Calu3 (cell line): ENCODE measurements at regions of chr9 and their contacts with region 1.

Region 1: GRCh38 chr9:69898714-69899209 is 78.1 kb downstream of the CFAP95 start:
- DNase-seq: no peak
- H3K4me3 Mint-ChIP-seq: peak overlapping the region; percentile 26
- H3K27ac Mint-ChIP-seq: peak overlapping the region; percentile 82
- H3K4me1 Mint-ChIP-seq: peaks cover 38% of the 10 kb centered on the region
- H3K27me3 Mint-ChIP-seq: no peaks in the 10 kb centered on the region
- CTCF ChIP-seq: no peak

Region 2: GRCh38 chr9:69771775-69772418 is 126.9 kb before region 1 on chr9:
- CTCF ChIA-PET with region 1: no interaction called
- intact Hi-C with region 1: no loop called
- DNase-seq: no peak
- H3K4me3 Mint-ChIP-seq: no peak overlapping the region
- H3K27ac Mint-ChIP-seq: no peak overlapping the region
- H3K4me1 Mint-ChIP-seq: no peaks in the 10 kb centered on the region
- H3K27me3 Mint-ChIP-seq: no peaks in the 10 kb centered on the region
- CTCF ChIP-seq: no peak

Region 3: DNA sequence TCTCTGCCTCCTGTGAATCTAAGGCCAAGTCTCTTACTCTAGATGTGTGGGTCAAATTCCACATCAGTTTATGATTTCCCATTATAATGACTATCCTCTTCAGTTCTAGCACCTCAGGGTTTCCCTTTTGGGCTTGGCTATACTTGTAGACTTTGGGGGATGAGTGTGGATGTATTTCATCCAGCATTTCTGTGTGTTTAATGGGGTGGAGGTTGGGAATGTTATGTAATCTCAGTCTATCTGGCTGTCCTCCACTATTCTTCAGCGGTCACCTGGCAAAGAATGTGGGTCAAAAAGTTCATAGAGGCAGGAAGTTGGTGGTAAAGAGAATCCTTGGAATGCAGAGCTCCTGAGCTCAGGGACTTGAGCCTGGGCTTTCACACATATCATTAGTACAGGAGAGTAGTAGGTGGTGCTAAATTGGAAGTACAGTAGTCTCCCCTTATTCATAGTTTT is 13.3 kb before region 1 on chr9:
- CTCF ChIA-PET with region 1: interaction called, 4 read pairs
- intact Hi-C with region 1: loop called (anchors 2 kb)
- DNase-seq: peak; percentile 27
- H3K4me3 Mint-ChIP-seq: peak overlapping the region; percentile 28
- H3K27ac Mint-ChIP-seq: peak overlapping the region; percentile 56
- H3K4me1 Mint-ChIP-seq: peaks cover 18% of the 10 kb centered on the region
- H3K27me3 Mint-ChIP-seq: no peaks in the 10 kb centered on the region
- CTCF ChIP-seq: no peak

Region 4: DNA sequence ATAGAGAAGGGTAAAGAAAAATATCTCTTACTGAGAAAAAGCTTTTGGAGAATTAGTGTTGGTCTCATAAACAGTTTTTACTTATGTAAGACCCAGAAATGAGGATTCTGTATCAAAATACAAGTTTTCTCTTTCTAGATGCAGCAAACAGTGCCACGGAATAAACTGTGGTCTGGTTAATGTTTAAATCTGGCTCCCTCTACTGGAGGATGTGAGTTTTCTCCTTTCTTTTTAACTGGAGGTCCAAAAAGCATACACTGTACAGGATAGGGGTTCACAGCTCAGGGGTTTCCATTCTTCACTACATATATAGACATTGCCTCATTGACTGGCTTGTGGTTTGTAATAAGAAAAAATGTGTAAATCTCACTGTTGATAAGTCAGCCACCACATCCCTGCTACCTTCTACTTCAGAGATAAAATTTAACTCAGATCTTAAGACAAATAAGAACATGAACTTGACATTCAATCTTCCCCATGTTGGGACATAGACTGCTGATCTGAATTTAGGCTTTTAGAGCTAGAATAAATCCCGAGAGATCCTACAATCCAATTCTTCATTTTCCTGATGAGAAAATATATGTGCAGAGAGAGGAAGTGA is 20.8 kb after region 1 on chr9:
- CTCF ChIA-PET with region 1: interaction called, 6 read pairs
- intact Hi-C with region 1: loop called (anchors 2 kb)
- DNase-seq: no peak
- H3K4me3 Mint-ChIP-seq: no peak overlapping the region
- H3K27ac Mint-ChIP-seq: no peak overlapping the region
- H3K4me1 Mint-ChIP-seq: no peaks in the 10 kb centered on the region
- H3K27me3 Mint-ChIP-seq: no peaks in the 10 kb centered on the region
- CTCF ChIP-seq: peak; percentile 50